Colonic mucosa (tissue), 4 donors: ENCODE measurements at regions of chr21 and their contacts with region 1.

Region 1: DNA sequence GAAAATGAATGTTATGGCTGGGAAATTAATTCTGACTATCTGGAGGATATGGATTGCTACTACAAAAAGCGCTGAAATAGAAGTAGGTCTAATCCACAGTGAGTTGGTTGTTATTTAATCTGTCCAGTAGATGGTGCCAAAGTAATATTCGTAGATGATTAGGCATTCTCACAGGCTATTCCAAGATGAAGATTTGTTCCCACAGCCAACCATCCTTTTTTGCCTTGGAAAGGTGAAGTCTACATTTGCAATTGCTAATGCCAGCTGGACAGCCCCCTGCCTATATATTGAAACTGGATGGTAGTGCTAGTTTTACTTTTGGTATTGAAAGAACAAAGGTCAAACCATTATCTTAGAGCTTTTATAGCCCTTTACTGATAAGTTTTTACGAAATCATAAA is 43.8 kb downstream of the RBM11 start:
- DNase-seq: peak; percentile 30
- H3K4me3 ChIP-seq: no peak overlapping the region
- H3K27ac ChIP-seq: peak overlapping the region; percentile 63
- H3K4me1 ChIP-seq: peaks cover 5% of the 10 kb centered on the region
- H3K27me3 ChIP-seq: no peaks in the 10 kb centered on the region
- CTCF ChIP-seq: peak; percentile 37

Region 2: GRCh38 chr21:14382835-14383594 is 123.3 kb after region 1 on chr21 and contains the start of gene HSPA13:
- intact Hi-C with region 1: loop called (anchors 10 kb)
- DNase-seq: peak; percentile 100
- H3K4me3 ChIP-seq: peak within 1 kb of the TSS; percentile 83
- H3K27ac ChIP-seq: peak within 1 kb of the TSS; percentile 80
- H3K4me1 ChIP-seq: no peaks in the 10 kb centered on the region
- H3K27me3 ChIP-seq: no peaks in the 10 kb centered on the region
- CTCF ChIP-seq: no peak
- total RNA-seq, gene HSPA13: 13.2 to 26.2 TPM

Region 3: DNA sequence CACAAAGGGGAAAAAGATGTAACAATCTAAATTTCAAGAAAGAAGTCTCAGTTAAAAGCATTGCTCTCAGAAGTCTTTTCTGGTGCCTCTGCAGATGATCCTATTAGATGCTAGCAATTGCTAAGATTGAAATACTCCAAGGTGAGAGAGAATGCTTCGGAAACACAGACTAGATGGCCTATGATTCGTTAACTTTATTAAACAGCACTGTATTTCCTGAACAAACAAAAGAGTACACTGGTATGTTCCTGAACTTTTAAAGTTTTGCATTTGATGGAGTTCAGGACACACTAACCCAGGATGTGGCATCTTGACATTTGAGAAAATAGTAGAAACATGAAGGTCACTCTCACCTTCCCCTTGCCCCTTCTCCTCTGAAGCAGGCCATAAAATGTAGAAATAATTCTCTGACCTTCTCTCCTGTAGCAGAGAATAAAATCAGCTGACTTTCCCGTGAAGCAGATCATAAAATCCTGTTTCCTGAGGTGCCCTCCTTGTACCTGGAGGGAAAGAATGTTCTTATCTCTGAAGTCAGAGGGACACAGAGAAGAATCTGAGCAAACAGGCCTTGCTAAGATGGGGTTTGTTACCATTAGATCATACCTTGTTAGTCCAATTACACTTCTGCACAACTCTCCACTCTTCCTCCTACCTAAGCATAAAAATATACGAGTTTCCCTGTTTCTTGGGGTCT is 1327.2 kb after region 1 on chr21:
- intact Hi-C with region 1: loop called (anchors 10 kb)
- DNase-seq: no peak
- H3K4me3 ChIP-seq: no peak overlapping the region
- H3K27ac ChIP-seq: no peak overlapping the region
- H3K4me1 ChIP-seq: no peaks in the 10 kb centered on the region
- H3K27me3 ChIP-seq: no peaks in the 10 kb centered on the region
- CTCF ChIP-seq: no peak